A673 (cell line): ENCODE measurements at regions of chr9 and their contacts with region 1.

Region 1: GRCh38 chr9:20941174-20941690 is 90.2 kb downstream of the HACD4 start:
- DNase-seq: peak; percentile 66
- H3K4me3 ChIP-seq: no peak overlapping the region
- H3K27ac ChIP-seq: no peak overlapping the region
- H3K4me1 ChIP-seq: peaks cover 4% of the 10 kb centered on the region
- H3K27me3 ChIP-seq: no peaks in the 10 kb centered on the region
- CTCF ChIP-seq: peak; percentile 72

Region 2: DNA sequence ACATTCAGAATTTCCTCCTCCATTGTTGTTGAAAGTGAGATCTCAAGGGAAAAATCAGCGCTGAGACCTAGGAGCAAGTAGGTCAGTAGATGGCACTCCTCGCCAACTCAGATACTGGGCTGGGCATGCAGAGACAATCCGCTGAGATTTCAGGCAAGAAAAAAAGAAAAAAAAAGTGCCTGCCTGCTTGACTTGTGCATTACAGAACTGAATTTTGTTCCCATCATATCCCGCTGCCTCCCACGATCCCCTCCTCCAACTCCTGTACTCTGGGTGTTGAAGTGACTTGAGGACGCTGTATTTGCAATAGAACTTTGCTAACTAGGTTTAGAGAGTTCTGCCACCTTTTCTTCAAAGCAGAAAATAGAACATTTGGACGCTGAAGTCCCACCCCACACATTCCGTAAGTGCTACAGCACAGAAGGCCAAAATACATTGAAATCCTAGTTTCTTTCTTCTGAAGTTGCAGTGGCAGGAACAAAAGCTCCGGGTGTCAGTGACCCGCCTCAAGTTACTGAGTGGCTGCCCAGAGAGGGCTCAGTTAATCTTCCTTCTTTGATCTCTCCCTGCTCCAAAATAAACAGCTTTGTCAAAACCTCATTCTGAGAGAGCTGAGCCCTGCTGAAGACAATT is 584.7 kb before region 1 on chr9:
- CTCF ChIA-PET with region 1: interaction called, 4 read pairs
- POLR2A ChIA-PET with region 1: no interaction called
- intact Hi-C with region 1: loop called (anchors 2 kb)
- DNase-seq: peak; percentile 84
- H3K4me3 ChIP-seq: no peak overlapping the region
- H3K27ac ChIP-seq: peak overlapping the region; percentile 53
- H3K4me1 ChIP-seq: peaks cover 52% of the 10 kb centered on the region
- H3K27me3 ChIP-seq: no peaks in the 10 kb centered on the region
- CTCF ChIP-seq: peak; percentile 68

Region 3: DNA sequence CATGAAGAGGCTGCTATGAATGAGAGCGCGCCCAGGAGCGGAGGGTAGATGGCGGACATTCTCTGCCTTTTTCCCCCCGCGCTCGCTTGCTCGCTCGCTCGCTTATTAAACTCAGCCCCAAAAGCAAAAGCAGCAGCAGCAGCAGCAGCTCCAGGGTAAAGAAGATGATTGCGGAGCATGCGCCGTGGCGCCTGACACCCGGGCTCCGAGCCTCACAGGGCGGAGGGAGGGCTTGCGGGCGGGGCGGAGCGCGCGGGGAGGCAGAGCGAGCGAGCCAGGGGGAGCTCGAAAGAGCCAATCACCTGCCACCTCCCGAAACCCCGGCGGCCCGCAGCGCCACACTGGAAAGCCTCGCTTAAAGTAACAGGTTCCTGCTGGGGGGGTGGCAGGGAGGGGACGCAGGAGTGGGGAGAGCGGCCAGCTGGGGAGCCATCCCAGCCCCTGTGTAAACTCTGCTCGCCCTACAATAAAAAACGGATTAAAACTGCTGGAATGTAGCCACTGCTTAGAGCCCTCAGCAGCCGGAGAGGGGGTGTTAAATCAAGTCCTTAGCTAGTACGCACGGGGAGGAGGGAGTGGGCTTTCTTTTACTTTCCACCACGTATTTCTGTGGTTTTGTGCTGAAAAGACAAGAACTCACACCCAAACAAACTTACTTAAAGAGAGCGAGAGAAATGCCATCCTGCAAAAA is 318.8 kb before region 1 on chr9 and contains the start of gene MLLT3:
- CTCF ChIA-PET with region 1: interaction called, 7 read pairs
- POLR2A ChIA-PET with region 1: no interaction called
- intact Hi-C with region 1: loop called (anchors 1 kb)
- DNase-seq: peak; percentile 95
- H3K4me3 ChIP-seq: peak within 1 kb of the TSS; percentile 74
- H3K27ac ChIP-seq: peak within 1 kb of the TSS; percentile 87
- H3K4me1 ChIP-seq: peaks cover 27% of the 10 kb centered on the region
- H3K27me3 ChIP-seq: no peaks in the 10 kb centered on the region
- CTCF ChIP-seq: no peak
- total RNA-seq, gene MLLT3: 24.2 and 28.5 TPM in 2 replicates

Region 4: DNA sequence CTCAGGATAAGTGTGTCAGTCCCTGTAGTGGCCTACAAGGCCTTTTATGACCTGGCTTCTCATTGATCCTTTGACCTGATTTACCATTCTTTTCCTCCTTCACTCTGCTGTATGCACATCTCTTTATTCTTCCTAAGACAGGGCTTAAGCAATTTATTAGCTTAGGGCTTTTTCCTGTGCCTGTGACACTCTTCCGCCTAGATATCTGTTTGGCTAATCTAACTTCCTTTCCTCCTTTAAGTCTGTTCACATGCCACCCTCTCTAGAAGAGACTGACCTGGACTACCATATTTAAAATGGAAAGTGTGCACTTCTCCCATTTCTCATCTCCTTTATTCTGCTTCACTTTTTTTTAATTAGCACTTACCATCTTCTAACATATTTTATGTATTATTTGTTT is 228.1 kb before region 1 on chr9:
- CTCF ChIA-PET with region 1: interaction called, 3 read pairs
- POLR2A ChIA-PET with region 1: interaction called, 6 read pairs
- intact Hi-C with region 1: loop called (anchors 1 kb)
- DNase-seq: peak; percentile 75
- H3K4me3 ChIP-seq: no peak overlapping the region
- H3K27ac ChIP-seq: peak overlapping the region; percentile 98
- H3K4me1 ChIP-seq: peaks cover 53% of the 10 kb centered on the region
- H3K27me3 ChIP-seq: no peaks in the 10 kb centered on the region
- CTCF ChIP-seq: no peak

Region 5: DNA sequence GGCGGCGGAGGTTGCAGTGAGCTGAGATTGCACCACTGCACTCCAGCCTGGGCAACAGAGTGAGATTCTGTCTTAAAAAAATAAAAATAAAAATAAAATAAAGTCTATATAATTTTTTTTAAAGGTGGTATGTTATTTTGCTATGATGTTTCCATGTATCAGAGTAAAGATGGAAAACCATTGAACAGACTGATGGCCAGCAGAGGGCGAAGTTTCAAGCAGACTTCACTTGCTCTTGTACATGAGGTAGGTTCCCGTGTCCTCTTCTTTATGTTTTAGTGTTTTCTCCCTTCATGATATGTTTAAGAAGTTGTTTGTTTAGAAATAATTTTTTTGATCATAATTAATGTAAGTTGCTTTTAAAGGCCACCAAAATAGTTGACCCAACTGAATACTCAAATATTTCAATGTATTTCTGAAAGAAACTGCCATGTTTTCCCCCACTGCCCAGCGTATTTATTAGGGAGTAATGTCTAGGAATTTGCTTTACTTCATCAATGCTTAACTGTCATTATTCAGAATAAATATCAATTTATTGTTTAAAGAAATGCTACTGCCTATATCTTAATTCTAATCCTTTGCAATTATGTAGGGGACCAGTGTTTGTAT is 56.1 kb before region 1 on chr9:
- CTCF ChIA-PET with region 1: interaction called, 5 read pairs
- POLR2A ChIA-PET with region 1: no interaction called
- intact Hi-C with region 1: loop called (anchors 5 kb)
- DNase-seq: peak; percentile 49
- H3K4me3 ChIP-seq: no peak overlapping the region
- H3K27ac ChIP-seq: no peak overlapping the region
- H3K4me1 ChIP-seq: no peaks in the 10 kb centered on the region
- H3K27me3 ChIP-seq: no peaks in the 10 kb centered on the region
- CTCF ChIP-seq: peak; percentile 57

Region 6: GRCh38 chr9:20989923-20990341 is 48.7 kb after region 1 on chr9:
- CTCF ChIA-PET with region 1: no interaction called
- POLR2A ChIA-PET with region 1: no interaction called
- intact Hi-C with region 1: no loop called
- DNase-seq: no peak
- H3K4me3 ChIP-seq: no peak overlapping the region
- H3K27ac ChIP-seq: no peak overlapping the region
- H3K4me1 ChIP-seq: no peaks in the 10 kb centered on the region
- H3K27me3 ChIP-seq: no peaks in the 10 kb centered on the region
- CTCF ChIP-seq: no peak

Region 7: DNA sequence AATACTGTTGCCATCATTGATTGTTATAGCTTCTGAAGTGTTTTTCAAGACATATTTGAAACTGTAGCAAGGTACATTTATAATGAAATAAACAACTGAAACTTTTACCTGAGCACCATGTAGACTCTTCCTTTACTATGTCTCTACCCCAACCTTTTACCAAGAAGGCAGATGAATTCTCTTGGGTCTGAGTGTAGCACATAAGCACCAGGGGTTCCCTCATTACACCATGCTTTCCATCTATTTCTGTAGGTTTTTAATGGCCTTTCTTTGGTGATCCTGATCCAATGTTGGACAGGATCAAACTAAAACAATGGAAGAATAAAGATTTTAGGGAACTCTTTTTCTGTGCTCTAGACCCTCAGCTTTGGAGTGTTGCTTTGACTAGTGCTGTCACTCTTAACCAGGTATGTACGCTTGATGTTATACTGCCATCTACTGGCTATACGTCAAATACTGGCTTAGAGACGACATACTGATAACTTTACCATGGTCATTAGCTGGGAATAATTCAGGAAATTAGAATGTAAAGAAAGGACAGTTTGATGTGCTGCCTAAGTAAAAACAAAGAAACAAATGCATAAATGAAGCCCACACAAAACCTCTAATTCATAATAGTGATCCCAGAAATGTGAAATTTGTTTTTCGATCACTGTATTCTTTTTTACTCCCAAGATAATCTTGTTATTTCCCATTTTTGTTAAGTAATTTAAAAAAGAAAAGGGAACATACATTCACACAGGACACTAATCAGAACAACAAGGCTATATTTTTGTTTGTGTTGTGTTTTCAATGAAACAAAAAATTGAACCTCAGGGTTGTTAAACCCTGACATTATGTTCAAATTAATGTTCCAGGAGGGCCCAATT is 169.7 kb after region 1 on chr9:
- CTCF ChIA-PET with region 1: interaction called, 6 read pairs
- POLR2A ChIA-PET with region 1: no interaction called
- intact Hi-C with region 1: loop called (anchors 10 kb)
- DNase-seq: peak; percentile 74
- H3K4me3 ChIP-seq: no peak overlapping the region
- H3K27ac ChIP-seq: no peak overlapping the region
- H3K4me1 ChIP-seq: peaks cover 4% of the 10 kb centered on the region
- H3K27me3 ChIP-seq: no peaks in the 10 kb centered on the region
- CTCF ChIP-seq: peak; percentile 69